Uterus (tissue), 4 donors: ENCODE measurements at regions of chr17 and their contacts with region 1.

Region 1: DNA sequence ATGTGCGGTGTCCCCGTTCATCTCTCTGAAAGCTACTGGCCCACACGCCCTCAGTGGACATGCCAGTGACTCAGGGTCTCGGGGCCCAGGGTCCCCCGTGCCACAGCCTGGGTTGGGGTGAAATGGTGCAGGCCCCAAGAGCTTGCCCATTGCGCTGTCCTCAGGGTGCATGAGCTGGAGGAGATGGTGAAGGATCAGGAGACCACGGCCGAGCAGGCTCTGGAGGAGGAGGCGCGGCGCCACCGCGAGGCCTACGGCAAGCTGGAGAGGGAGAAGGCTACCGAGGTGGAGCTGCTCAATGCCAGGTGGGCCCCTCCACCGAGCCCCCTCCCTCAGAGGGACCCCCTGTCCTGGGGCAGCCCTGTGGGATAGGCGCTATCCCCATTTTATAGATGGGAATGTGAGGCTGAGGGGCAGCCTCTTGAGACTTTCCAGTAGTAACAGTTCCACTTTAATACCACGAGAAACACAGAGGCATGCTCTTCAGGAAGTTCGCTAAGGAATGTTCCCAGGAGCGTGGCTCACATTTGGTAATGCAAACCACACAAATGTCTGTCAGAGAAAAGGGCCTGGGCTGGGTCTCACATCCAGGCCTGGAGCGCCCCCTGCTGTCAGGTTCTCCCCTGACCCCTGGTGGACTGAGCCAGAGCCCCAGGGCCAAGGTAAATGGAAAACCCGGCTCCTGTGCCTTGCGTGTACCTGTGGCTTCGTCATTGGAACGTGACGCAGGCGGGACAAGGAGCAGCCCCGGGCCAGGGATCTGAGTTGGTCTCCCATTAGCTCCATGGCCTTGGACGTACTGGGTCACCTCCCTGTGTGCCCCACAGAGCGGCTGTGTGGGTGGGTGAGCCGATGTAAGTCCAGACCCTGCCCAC is 133.7 kb downstream of the RAB11FIP4 start:
- DNase-seq: peak; percentile 67 to 69
- H3K4me3 ChIP-seq: no peak overlapping the region
- H3K27ac ChIP-seq: no peak overlapping the region
- H3K4me1 ChIP-seq: no peaks in the 10 kb centered on the region
- H3K27me3 ChIP-seq: no peaks in the 10 kb centered on the region
- CTCF ChIP-seq: peak; percentile 66 to 83 (median 68)
- POLR2A ChIP-seq: no peak

Region 2: GRCh38 chr17:31433091-31433790 is 91.9 kb before region 1 on chr17:
- intact Hi-C with region 1: loop called (anchors 10 kb)
- DNase-seq: no peak
- H3K4me3 ChIP-seq: no peak overlapping the region
- H3K27ac ChIP-seq: no peak overlapping the region
- H3K4me1 ChIP-seq: no peaks in the 10 kb centered on the region
- H3K27me3 ChIP-seq: no peaks in the 10 kb centered on the region
- CTCF ChIP-seq: no peak
- POLR2A ChIP-seq: no peak